ENCODE measurements at regions of chr9 and their contacts with region 1.

Region 1: DNA sequence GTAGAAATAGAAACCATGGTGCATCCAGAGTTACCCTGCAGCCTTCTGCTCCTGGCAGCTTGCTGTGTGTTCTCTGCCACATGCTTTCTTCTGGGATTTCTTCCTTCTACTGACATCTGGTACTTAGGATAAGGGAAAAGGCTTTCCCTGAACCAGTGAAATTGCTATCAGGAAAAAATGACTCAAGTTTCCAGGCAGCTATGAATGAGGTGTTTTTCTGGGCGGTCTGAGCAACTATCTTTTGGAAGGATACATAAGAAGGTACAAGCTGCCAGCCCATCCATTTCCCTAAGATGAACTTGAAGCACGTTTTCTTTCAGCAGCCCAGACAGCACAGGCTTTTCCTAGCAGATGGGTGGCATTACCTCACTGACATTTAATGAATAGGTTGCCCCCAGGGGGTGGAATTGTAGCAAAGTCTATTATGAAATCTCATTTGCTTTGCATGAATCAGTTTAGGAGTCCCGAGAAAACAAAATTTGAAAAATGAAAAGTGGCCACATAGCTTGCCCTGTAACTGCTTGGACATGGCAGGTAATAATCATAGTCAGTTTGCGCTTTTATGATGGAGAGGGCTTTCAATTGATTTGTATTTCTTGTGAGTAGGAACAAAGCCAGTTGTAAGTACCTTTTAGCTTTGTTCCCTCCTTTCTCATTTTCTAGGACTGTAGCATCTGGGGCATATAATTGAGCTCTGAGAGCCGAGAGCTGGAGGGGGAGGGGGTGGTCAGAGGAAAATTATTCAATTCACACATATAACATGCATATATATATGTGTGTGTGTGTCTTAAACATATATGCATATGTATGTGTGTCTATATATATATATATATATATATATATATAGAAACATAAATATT is 108.5 kb downstream of the C9orf152 start:
- DNase-seq: no peak
- H3K4me3 ChIP-seq: no peak overlapping the region
- H3K27ac ChIP-seq: no peak overlapping the region
- H3K4me1 ChIP-seq: peaks cover 0 to 8% (median 7%) of the 10 kb centered on the region in 3 donors
- H3K27me3 ChIP-seq: no peaks in the 10 kb centered on the region
- CTCF ChIP-seq: no peak

Region 2: DNA sequence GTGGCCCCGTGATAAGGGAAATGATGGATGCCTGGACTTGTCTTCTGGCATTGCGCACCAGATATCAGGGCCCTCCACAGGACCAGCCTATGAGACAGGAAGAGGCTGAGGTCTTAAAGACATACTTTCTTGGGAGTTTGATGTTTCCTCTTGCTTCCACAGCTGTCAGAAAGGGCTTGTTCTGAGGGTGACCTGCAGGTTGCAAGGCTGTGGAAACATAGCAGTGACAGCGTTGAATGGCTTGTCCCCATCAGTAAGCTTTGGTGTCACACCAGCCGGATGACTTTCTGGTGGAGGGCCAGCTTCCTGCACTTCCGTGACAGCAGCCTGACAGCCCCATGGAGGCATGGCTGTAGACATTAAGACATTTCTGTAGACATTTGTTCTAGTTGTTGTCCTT is 34.7 kb before region 1 on chr9:
- intact Hi-C with region 1: loop called (anchors 5 kb)
- DNase-seq: no peak
- H3K4me3 ChIP-seq: no peak overlapping the region
- H3K27ac ChIP-seq: peak overlapping the region in 1 of 2 donors; percentile 4
- H3K4me1 ChIP-seq: peaks cover 0 to 7% (median 6%) of the 10 kb centered on the region in 3 donors
- H3K27me3 ChIP-seq: no peaks in the 10 kb centered on the region
- CTCF ChIP-seq: no peak

Region 3: GRCh38 chr9:110604171-110604601 is 504.7 kb after region 1 on chr9:
- intact Hi-C with region 1: no loop called
- DNase-seq: no peak
- H3K4me3 ChIP-seq: no peak overlapping the region
- H3K27ac ChIP-seq: no peak overlapping the region
- H3K4me1 ChIP-seq: no peaks in the 10 kb centered on the region
- H3K27me3 ChIP-seq: no peaks in the 10 kb centered on the region
- CTCF ChIP-seq: no peak

Region 4: DNA sequence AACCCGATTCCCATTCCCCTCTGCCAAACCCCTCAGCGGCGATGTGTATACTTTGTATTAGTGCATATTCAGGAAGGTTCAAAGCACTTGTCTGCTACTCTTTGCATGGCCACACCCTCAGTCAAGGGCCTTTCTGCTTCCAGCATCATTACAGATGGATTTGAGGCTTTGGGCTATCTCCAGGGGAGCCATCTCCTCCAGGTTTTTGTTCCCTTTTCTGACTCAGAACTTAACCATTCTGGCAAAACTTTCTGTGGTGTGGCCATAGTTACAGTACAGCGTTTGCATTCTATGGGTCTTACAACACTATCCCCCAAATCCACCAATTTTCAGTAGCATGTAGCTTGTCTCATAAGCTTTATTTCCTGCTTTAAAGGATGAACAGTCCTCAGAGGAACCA is 516.0 kb after region 1 on chr9:
- intact Hi-C with region 1: no loop called
- DNase-seq: no peak
- H3K4me3 ChIP-seq: no peak overlapping the region
- H3K27ac ChIP-seq: no peak overlapping the region
- H3K4me1 ChIP-seq: no peaks in the 10 kb centered on the region
- H3K27me3 ChIP-seq: no peaks in the 10 kb centered on the region
- CTCF ChIP-seq: no peak